ENCODE measurements at regions of chr16 and their contacts with region 1.

Region 1: GRCh38 chr16:9090960-9091866 is at the start of gene HAPSTR1:
- DNase-seq: peak; percentile 100
- H3K4me3 ChIP-seq: peak within 1 kb of the TSS; percentile 82 to 86 (median 83)
- H3K27ac ChIP-seq: peak within 1 kb of the TSS; percentile 72
- H3K4me1 ChIP-seq: peaks cover 27% of the 10 kb centered on the region
- H3K27me3 ChIP-seq: no peaks in the 10 kb centered on the region
- CTCF ChIP-seq: no peak
- total RNA-seq, gene HAPSTR1: 92.6 to 124 TPM

Region 2: DNA sequence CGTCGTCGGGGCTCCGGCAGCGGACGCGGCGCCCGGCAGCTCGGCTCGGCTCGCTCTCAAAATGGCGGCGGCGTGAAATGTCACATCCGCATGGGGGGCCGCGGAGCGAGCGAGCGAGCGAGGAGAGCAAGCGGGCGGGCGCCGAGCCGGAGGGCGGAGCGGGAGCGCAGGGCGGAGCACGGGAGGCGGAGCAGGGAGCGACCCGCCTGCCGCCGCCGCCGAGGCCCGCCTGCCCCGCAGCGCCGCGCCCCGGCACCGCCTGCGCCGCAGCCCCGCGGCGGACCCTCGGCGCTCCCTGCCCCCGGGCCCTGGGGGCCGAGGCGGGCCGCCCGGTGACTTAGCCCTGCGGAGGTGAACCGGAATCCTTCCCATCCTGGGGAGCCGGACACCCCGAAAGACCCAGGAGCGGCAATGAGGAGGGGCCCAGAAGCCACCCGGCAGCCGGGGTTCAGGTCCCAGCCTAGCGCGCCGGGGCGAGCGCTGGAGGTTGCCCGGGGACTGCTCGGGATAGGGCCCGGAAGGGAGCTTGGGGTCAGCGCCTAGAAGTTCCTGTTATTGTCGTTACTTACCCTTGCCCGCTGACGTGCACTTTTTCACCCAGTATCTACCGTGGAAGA is 127.3 kb before region 1 on chr16 and contains the start of gene USP7:
- CTCF ChIA-PET with region 1: no interaction called
- dilution Hi-C with region 1: no loop called
- in situ Hi-C with region 1: no loop called
- intact Hi-C with region 1: loop called (anchors 10 kb)
- DNase-seq: peak; percentile 88
- H3K4me3 ChIP-seq: peak within 1 kb of the TSS; percentile 69 to 80 (median 69)
- H3K27ac ChIP-seq: peak within 1 kb of the TSS; percentile 24
- H3K4me1 ChIP-seq: peaks cover 16% of the 10 kb centered on the region
- H3K27me3 ChIP-seq: no peaks in the 10 kb centered on the region
- CTCF ChIP-seq: no peak
- total RNA-seq, gene USP7: 52.7 to 113 TPM

Region 3: DNA sequence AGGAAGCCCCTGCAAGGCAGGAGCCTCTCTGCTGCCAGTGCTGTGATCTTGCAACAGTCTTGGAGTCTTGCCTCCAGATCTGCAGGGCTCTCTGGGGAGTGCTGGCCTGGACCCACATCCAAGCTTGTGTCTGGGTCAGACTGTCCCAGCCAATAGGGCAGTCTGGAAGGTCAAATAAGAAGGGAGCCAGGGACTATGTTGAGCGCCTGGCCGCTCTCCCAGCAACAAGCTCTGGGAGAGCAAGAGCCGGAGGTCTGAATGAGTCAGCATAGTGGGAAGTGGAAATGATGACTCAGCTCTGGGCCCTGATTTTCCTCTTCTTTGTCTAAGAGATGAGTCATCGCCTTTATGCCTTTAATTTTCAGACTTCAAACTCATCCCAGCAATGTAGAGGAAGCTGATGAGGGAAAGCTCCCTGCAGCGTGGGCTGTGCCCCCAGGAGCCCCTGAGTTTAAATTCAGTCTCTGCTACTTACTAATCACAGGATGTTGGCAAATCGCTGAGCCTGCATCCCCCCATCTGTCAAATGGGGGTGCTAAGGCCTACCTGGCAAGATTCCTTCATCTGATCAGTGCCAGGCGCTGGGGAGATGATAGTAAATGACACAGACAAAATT is 43.4 kb before region 1 on chr16:
- CTCF ChIA-PET with region 1: no interaction called
- dilution Hi-C with region 1: no loop called
- in situ Hi-C with region 1: no loop called
- intact Hi-C with region 1: loop called (anchors 1 kb)
- DNase-seq: peak; percentile 95
- H3K4me3 ChIP-seq: no peak overlapping the region
- H3K27ac ChIP-seq: peak overlapping the region; percentile 63
- H3K4me1 ChIP-seq: peaks cover 19% of the 10 kb centered on the region
- H3K27me3 ChIP-seq: no peaks in the 10 kb centered on the region
- CTCF ChIP-seq: no peak

Region 4: GRCh38 chr16:9068886-9069285 is 22.3 kb before region 1 on chr16:
- CTCF ChIA-PET with region 1: no interaction called
- dilution Hi-C with region 1: no loop called
- in situ Hi-C with region 1: no loop called
- intact Hi-C with region 1: loop called (anchors 1 kb)
- DNase-seq: peak; percentile 68
- H3K4me3 ChIP-seq: no peak overlapping the region
- H3K27ac ChIP-seq: peak overlapping the region; percentile 96
- H3K4me1 ChIP-seq: peaks cover 31% of the 10 kb centered on the region
- H3K27me3 ChIP-seq: no peaks in the 10 kb centered on the region
- CTCF ChIP-seq: no peak

Region 5: DNA sequence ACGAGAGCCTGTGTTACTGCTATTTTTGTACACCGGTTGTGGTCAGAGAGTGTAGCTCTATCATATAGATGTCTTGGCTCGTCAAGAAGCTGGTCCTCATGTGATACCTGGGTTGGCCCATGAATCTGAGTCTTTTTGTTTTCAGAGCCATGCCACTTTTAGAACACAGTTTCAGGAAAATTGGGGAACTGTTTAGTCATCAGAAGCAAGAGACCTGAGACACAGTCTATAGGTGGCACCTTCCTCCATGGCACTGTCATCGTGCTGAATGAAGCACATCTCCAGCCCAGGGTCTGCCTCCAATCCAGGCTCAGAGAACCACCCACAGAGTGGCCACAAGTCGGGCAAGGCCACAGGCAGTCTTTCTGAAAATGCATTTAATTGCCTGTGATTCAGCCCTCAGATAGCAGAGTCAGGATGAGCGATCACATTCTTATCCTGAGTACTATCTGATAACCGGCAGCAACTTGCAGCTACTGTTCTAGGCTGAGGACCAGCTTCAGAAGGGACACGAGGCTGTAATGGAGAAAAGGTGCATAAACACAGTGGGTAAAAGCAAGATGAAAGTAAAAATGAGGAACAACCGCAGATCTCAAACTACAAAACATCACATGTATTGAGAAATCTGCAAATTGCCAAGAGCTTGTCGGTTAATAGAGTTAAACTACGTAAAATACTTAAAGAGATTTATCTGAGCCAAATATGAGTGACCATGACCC is 14.0 kb before region 1 on chr16:
- CTCF ChIA-PET with region 1: interaction called, 3 read pairs
- dilution Hi-C with region 1: no loop called
- in situ Hi-C with region 1: no loop called
- intact Hi-C with region 1: loop called (anchors 1 kb)
- DNase-seq: peak; percentile 84
- H3K4me3 ChIP-seq: no peak overlapping the region
- H3K27ac ChIP-seq: peak overlapping the region; percentile 65
- H3K4me1 ChIP-seq: peaks cover 45% of the 10 kb centered on the region
- H3K27me3 ChIP-seq: no peaks in the 10 kb centered on the region
- CTCF ChIP-seq: no peak

Measured in mammary epithelial cell (primary cell).